ENCODE measurements at regions of chr4 and their contacts with region 1.

Region 1: GRCh38 chr4:7192252-7193029 is at the start of gene SORCS2:
- DNase-seq: peak; percentile 43 to 90 (median 66)
- ATAC-seq: peak; percentile 85 to 95 (median 91)
- H3K4me3 ChIP-seq: peak within 1 kb of the TSS in 2 of 4 donors; percentile 30 to 37
- H3K27ac ChIP-seq: no peak within 1 kb of the TSS
- H3K4me1 ChIP-seq: peaks cover 0 to 4% (median 0%) of the 10 kb centered on the region in 3 donors
- H3K27me3 ChIP-seq: peaks cover 0 to 16% (median 5%) of the 10 kb centered on the region in 4 donors
- CTCF ChIP-seq: peak in 3 of 4 donors; percentile 41 to 54 (median 48)
- total RNA-seq, gene SORCS2: 0.37 to 1.7 (median 0.66) TPM

Region 2: DNA sequence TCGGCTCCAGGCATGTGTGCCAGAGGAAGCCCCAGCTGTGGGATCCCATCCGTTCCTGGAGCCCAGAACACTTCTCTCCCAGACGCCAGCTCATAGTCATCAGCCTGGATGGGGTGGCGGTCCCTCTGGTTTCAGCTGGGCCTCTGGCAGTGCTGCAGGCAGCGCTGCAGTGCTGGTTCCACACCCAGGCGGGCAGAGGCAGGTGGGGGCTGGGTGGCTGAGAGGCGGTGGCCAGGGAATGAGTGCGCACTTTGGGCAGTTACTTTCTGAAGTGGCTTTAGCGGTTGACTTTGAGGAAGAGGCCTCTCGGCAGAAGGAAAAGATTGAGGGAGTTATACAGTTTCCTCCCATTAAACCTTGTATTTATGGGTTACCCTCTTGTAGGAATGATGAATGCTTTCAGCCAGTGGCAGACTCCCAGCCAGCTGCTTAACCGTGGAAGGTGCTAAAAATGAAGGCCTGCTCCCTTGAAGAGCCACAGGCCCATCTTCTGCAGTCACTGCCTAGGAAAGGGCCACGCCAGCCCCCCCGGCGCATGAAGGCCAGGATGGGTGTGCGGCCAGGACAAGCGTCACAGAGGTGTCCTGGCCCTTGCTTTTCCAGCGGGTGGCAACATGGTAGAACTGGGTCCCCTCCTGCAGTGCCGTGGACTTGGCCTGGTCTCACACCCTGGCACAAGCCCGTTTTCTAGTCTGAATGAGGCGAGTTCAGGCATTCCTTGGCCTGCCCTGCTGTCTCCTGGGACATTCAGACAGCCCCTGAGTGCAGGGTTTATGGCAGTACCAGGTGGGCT is 139.3 kb before region 1 on chr4:
- intact Hi-C with region 1: no loop called
- DNase-seq: peak in 1 of 6 donors; percentile 29
- ATAC-seq: peak in 1 of 4 donors; percentile 21
- H3K4me3 ChIP-seq: no peak overlapping the region
- H3K27ac ChIP-seq: no peak overlapping the region
- H3K4me1 ChIP-seq: peaks cover 18 to 23% (median 18%) of the 10 kb centered on the region in 3 donors
- H3K27me3 ChIP-seq: no peaks in the 10 kb centered on the region
- CTCF ChIP-seq: no peak

Region 3: GRCh38 chr4:7295911-7296660 is 103.6 kb after region 1 on chr4:
- intact Hi-C with region 1: loop called in 2 of 3 experiments (anchors 5 kb)
- DNase-seq: peak in 1 of 6 donors; percentile 19
- ATAC-seq: peak in 3 of 4 donors; percentile 52 to 75 (median 72)
- H3K4me3 ChIP-seq: no peak overlapping the region
- H3K27ac ChIP-seq: no peak overlapping the region
- H3K4me1 ChIP-seq: no peaks in the 10 kb centered on the region
- H3K27me3 ChIP-seq: no peaks in the 10 kb centered on the region
- CTCF ChIP-seq: peak in 2 of 4 donors; percentile 6 to 23

Region 4: DNA sequence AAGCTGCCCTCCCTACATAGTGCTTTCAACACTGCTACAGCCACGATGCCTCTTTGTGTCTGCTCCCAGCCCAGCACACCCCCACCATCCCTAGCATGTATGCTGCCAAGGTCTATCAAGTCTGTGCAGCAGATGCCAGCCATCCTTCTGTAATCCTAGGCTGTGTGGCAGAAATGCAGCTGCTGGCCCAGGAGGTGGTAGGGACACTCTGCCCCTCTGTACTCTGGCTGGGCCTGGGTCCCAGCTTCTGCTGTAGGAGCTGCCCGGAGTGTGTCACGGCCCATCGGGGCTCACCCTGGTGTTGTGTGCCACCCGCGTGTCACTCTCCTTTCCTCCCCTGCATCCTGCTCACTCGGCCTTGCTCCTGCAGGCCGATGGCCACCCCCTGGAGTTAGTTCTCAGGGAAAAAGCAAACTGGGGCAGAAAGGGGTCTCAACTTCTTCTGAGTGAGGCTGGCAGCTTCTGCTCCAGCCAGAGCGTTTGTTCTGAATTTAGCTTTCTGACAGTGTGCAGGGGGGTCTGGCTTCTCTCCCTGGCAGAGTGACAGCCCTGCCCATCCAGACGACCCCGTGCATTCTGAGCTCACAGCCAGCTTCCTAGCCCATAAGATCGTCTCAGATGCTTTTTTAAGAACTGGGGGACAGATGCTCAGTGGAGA is 219.6 kb after region 1 on chr4:
- intact Hi-C with region 1: no loop called
- DNase-seq: peak in 3 of 6 donors; percentile 4 to 39 (median 8)
- ATAC-seq: no peak
- H3K4me3 ChIP-seq: no peak overlapping the region
- H3K27ac ChIP-seq: no peak overlapping the region
- H3K4me1 ChIP-seq: no peaks in the 10 kb centered on the region
- H3K27me3 ChIP-seq: no peaks in the 10 kb centered on the region
- CTCF ChIP-seq: no peak

Region 5: DNA sequence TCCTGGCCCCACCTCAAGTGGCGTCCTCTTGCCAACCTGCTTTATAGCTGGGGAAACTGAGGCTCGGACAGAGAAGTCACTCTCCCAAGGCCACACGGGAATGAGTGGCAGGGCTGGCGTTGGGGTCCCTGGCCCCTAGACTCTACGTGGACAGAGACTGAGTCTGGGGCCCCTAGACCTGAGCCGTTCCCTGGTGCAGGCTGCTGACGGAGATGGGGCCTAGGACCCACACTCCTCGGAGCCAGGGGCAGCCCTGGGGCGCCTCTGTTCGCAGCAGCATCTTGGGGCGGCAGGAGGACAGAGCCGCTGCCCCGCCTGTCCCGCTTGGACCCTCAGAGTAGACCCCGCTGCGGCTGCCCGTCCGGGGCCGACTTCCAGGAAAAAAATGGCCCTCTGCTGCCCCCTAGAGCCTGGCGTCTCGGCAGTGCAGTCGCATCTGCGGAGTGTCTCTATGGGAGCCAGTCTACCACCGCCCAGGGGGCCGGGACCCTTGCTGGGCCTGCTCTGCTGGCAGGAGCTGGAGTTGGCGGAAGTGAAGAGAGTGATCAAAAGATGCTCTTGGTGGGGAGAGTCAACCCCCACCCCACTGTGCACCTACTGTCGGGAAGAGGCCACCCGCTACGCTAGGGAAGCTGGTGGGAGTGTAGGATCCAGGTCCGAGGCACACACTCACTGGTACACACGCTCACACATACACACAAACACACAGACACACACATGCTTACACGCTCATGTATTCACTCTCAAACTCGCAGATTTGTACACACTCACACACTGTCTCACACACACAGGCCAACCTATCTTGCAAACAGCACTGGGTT is 527.1 kb after region 1 on chr4:
- intact Hi-C with region 1: loop called in 2 of 3 experiments (anchors 5 to 10 kb)
- DNase-seq: peak in 5 of 6 donors; percentile 22 to 87 (median 57)
- ATAC-seq: peak; percentile 46 to 83 (median 78)
- H3K4me3 ChIP-seq: no peak overlapping the region
- H3K27ac ChIP-seq: no peak overlapping the region
- H3K4me1 ChIP-seq: no peaks in the 10 kb centered on the region
- H3K27me3 ChIP-seq: peaks cover 0 to 6% (median 3%) of the 10 kb centered on the region in 4 donors
- CTCF ChIP-seq: peak; percentile 66 to 84 (median 74)

Measured in pancreas (tissue), 10 donors.